ENCODE measurements at regions of chr5 and their contacts with region 1.

Region 1: DNA sequence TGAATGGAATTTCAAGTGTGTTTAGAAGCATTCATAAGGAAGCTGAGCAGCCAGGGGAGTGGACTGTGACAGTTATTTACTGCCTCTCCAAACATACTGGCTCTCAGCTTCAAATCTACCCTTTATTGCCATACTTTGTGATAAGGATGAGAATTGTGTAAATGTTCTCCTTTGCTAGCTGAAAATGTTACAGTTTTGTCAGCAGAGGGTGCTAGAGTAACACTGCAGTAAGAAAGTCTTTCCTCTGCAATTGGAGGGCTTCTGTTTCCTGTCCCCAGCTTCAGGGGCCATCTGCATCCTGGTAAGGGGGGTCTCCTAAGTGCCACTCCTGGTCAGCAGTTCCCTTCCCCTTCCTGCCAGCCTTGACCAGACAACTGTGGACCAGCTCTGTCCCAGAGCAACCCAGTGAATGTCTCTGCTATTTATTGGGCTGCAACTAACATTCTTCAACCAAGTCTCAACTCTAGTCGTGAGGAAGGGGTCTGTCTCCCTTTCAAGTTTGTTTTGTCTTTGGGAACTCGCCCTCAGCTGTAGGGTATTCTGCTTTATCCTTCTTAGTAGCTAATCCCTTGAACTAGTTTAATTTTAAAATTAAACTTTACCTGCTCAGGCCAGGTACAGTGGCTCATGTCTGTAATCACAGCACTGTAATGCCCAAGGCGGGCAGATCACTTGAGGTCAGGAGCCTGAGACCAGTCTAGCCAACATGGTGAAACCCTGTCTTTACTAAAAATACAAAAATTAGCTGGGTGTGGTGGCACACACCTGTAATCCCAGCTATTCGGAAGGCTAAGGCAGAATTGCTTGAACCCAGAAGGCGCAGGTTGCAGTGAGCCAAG is 45.3 kb downstream of the RAPGEF6 start:
- DNase-seq: peak in 4 of 10 donors; percentile 4 to 77 (median 30)

Region 2: GRCh38 chr5:131796793-131797693 is 207.3 kb after region 1 on chr5 and contains the start of gene FNIP1:
- intact Hi-C with region 1: loop called (anchors 1 kb)
- DNase-seq: peak; percentile 99 to 100 (median 100)

Region 3: GRCh38 chr5:132064738-132065331 is 475.1 kb after region 1 on chr5:
- intact Hi-C with region 1: loop called (anchors 5 kb)
- DNase-seq: peak in 9 of 10 donors; percentile 39 to 93 (median 78)

Region 4: DNA sequence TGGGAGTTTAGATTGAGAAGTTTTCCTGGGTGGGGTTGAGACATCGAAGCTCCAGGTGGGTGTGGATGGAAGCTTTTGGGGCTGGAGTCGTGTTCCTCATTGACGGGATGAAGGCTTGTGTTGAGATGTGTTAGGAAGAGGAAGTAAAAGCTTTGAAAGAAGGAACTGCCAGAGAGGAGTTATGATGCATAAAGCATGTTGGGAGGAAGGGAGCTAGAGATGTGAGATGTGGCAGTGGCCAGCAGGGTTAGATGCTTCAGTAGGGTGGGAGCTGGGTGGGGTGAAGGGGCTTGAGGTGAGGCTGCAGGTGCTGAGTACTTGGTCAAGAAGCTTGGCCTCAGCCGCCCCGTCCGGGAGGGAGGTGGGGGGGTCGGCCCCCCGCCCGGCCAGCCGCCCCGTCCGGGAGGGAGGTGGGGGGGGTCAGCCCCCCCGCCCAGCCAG is 1518.8 kb after region 1 on chr5:
- intact Hi-C with region 1: no loop called
- DNase-seq: no peak